ENCODE measurements at regions of chr3 and their contacts with region 1.

Region 1: GRCh38 chr3:16369276-16369675 is 104.3 kb downstream of the OXNAD1 start:
- DNase-seq: no peak

Region 2: DNA sequence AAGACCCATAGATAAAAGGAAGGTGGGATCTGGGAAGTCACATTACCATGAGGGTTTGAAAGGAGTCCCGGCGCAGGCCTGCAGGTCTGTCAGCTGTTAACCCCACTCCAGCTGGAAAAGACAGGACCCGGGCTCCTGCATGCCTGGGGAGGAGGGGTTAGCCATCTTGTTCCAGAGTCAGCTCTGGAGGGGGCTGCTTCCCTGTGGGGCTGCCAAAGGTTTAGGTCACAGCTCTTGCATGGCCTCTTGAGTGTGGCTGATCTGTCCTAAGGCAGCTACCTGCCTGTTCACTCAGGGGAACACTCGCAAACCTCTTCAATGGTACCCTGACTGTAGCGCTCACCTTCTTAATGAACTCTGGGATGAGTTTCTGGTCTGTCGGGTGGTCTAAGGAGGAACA is 39.8 kb after region 1 on chr3:
- intact Hi-C with region 1: loop called in 1 of 2 experiments (anchors 1 kb)
- DNase-seq: no peak